ENCODE measurements at regions of chr21 and their contacts with region 1.

Region 1: GRCh38 chr21:17461014-17461413 is 51.8 kb upstream of the CXADR start:
- DNase-seq: peak; percentile 92
- ATAC-seq: peak; percentile 70
- H3K4me3 ChIP-seq: no peak overlapping the region
- H3K27ac ChIP-seq: no peak overlapping the region
- H3K4me1 ChIP-seq: peaks cover 7% of the 10 kb centered on the region; the same call in 1 of the 2 replicates
- H3K27me3 ChIP-seq: no peaks in the 10 kb centered on the region
- CTCF ChIP-seq: no peak
- POLR2A ChIP-seq: no peak
- RAD21 ChIP-seq: 0 out of 2 replicates have a peak, but pooled peaks have one; percentile 4

Region 2: DNA sequence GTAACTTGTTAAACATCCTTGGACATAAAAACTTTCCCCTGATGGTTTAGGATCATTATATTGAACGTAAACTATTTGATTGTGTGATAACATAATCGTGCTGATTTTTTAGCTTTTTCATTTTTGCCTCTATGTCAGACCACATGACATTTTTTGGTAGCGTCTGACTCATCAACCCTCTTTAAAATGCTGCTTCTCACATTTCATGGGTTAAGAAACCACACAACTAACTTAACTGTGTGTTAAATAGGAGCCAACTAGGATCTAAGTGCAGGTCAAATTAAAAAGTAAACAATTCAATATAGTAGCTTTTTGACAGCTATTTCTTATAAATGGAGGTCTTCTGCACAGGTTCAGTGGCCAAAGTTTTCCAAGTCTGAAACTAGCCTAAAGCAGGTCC is 141.9 kb after region 1 on chr21:
- CTCF ChIA-PET with region 1: no interaction called
- POLR2A ChIA-PET with region 1: no interaction called
- dilution Hi-C with region 1: no loop called
- in situ Hi-C with region 1: no loop called
- intact Hi-C with region 1: loop called (anchors 10 kb)
- DNase-seq: peak; percentile 74
- ATAC-seq: peak; percentile 74
- H3K4me3 ChIP-seq: no peak overlapping the region
- H3K27ac ChIP-seq: no peak overlapping the region
- H3K4me1 ChIP-seq: peaks cover 8% of the 10 kb centered on the region
- H3K27me3 ChIP-seq: no peaks in the 10 kb centered on the region
- CTCF ChIP-seq: no peak
- POLR2A ChIP-seq: no peak
- RAD21 ChIP-seq: no peak

Region 3: DNA sequence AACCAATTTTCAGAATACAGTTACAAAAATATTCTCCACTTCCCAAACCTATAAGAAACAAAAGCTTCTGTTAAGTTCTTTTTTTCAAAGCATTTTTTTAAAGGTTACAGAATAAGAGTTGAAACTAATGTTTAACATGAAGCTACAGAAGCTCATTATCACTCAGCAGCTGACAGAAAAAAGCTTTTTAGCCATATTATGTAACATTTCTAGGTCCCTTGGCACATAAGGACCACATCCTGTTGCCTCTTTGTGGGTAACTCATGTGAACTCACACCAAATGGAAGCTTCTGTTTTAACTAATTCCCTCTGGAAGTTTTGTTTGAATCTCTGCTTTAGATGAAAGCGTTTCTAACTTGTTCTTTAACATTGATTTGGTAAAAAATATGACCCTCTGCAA is 1185.1 kb after region 1 on chr21:
- CTCF ChIA-PET with region 1: no interaction called
- POLR2A ChIA-PET with region 1: no interaction called
- dilution Hi-C with region 1: no loop called
- in situ Hi-C with region 1: no loop called
- intact Hi-C with region 1: no loop called
- DNase-seq: no peak
- ATAC-seq: no peak
- H3K4me3 ChIP-seq: no peak overlapping the region
- H3K27ac ChIP-seq: no peak overlapping the region
- H3K4me1 ChIP-seq: no peaks in the 10 kb centered on the region
- H3K27me3 ChIP-seq: no peaks in the 10 kb centered on the region
- CTCF ChIP-seq: no peak
- POLR2A ChIP-seq: no peak
- RAD21 ChIP-seq: no peak

Measured in IMR-90 (cell line).